ENCODE measurements at regions of chr3 and their contacts with region 1.

Region 1: GRCh38 chr3:171187706-171188290 is 161.3 kb upstream of the SLC2A2 start:
- DNase-seq: no peak
- ATAC-seq: peak; percentile 63
- H3K4me3 ChIP-seq: no peak overlapping the region
- H3K27ac ChIP-seq: no peak overlapping the region
- H3K4me1 ChIP-seq: peaks cover 0 to 5% of the 10 kb centered on the region in 2 donors
- H3K27me3 ChIP-seq: no peaks in the 10 kb centered on the region

Region 2: DNA sequence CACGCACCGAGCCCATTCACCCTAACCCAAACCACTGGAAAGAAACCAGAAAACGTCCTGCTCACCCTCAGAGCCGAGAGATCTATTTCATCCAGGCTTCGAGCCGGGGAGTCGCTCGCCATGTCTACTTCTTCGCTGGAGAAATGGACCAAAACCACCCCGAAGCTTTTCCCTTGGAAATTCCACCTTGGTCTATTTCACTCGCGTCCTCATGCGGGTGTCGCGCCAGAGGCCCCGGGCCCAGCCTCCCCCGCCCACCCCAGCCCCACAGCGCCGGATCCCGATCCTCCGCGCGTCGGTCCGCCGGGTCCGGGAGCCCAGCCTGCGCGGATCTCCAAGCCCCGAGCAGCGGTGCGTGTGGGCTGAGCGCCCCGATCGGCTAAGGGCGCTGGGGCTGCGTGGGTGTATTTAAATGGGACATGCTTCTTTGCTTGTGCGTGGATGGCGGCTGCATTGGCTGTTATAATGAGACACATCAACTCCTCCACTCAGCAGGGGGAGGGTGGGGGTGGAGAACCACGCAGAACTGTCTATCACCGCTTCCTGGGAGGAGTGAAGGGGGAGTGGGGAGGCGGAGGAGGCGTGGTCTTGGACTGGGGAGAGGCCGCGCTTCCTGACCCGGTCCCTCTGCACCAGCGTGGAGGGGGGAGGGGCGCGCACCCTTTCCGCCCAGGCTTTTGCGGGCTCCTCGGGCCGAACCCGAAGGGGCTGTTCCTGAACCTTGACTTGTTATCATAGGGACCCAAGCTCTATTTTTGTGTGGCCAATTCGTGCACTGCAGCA is 272.3 kb after region 1 on chr3 and contains the start of gene TNIK:
- intact Hi-C with region 1: loop called (anchors 5 to 10 kb)
- DNase-seq: peak; percentile 96
- ATAC-seq: peak; percentile 94
- H3K4me3 ChIP-seq: peak within 1 kb of the TSS; percentile 68 to 87
- H3K27ac ChIP-seq: no peak within 1 kb of the TSS
- H3K4me1 ChIP-seq: peaks cover 0 to 3% of the 10 kb centered on the region in 2 donors
- H3K27me3 ChIP-seq: no peaks in the 10 kb centered on the region
- total RNA-seq, gene TNIK: 11.3 to 14.6 TPM